Right lobe of liver (tissue), 6 donors: ENCODE measurements at regions of chr3 and their contacts with region 1.

Region 1: GRCh38 chr3:141360888-141361598 is 7.3 kb upstream of the ZBTB38 start:
- DNase-seq: no peak
- ATAC-seq: peak; percentile 91 to 98 (median 94)
- H3K4me3 ChIP-seq: no peak overlapping the region
- H3K27ac ChIP-seq: peak overlapping the region in 1 of 3 donors; percentile 34
- H3K4me1 ChIP-seq: peaks cover 0 to 4% (median 0%) of the 10 kb centered on the region in 4 donors
- H3K27me3 ChIP-seq: no peaks in the 10 kb centered on the region
- CTCF ChIP-seq: peak; percentile 70 to 91 (median 78)
- POLR2A ChIP-seq: no peak

Region 2: GRCh38 chr3:141441381-141442364 is 80.6 kb after region 1 on chr3:
- intact Hi-C with region 1: loop called in 1 of 2 experiments (anchors 5 kb)
- DNase-seq: peak; percentile 63 to 79 (median 67)
- ATAC-seq: peak; percentile 91 to 97 (median 94)
- H3K4me3 ChIP-seq: no peak overlapping the region
- H3K27ac ChIP-seq: peak overlapping the region in 2 of 3 donors; percentile 21 to 37
- H3K4me1 ChIP-seq: peaks cover 0 to 9% (median 2%) of the 10 kb centered on the region in 4 donors
- H3K27me3 ChIP-seq: no peaks in the 10 kb centered on the region
- CTCF ChIP-seq: peak; percentile 43 to 85 (median 81)
- POLR2A ChIP-seq: no peak

Region 3: GRCh38 chr3:141769221-141769894 is 408.3 kb after region 1 on chr3:
- intact Hi-C with region 1: no loop called
- DNase-seq: no peak
- ATAC-seq: no peak
- H3K4me3 ChIP-seq: no peak overlapping the region
- H3K27ac ChIP-seq: no peak overlapping the region
- H3K4me1 ChIP-seq: no peaks in the 10 kb centered on the region
- H3K27me3 ChIP-seq: no peaks in the 10 kb centered on the region
- CTCF ChIP-seq: no peak
- POLR2A ChIP-seq: no peak